GM12878 (cell line): ENCODE measurements at regions of chr3 and their contacts with region 1.

Region 1: GRCh38 chr3:150408221-150409102 is at the start of gene TSC22D2:
- DNase-seq: peak; percentile 69
- ATAC-seq: peak; percentile 73
- H3K4me3 ChIP-seq: peak within 1 kb of the TSS; percentile 96
- H3K27ac ChIP-seq: peak within 1 kb of the TSS; percentile 92
- H3K4me1 ChIP-seq: no peaks in the 10 kb centered on the region
- H3K27me3 ChIP-seq: no peaks in the 10 kb centered on the region
- CTCF ChIP-seq: no peak
- EP300 ChIP-seq: peak; percentile 9 to 57; a peak in 1 of 4 replicates
- POLR2A ChIP-seq: peak; percentile 77
- RAD21 ChIP-seq: no peak
- polyA plus RNA-seq, gene TSC22D2: 10.5 to 19.4 TPM

Region 2: GRCh38 chr3:150227839-150228238 is 180.6 kb before region 1 on chr3:
- CTCF ChIA-PET with region 1: interaction called, 4 read pairs
- POLR2A ChIA-PET with region 1: no interaction called
- RAD21 ChIA-PET with region 1: interaction called, 5 read pairs
- SMC1A ChIA-PET with region 1: no interaction called
- in situ Hi-C with region 1: no loop called
- intact Hi-C with region 1: loop called (anchors 5 kb)
- DNase-seq: no peak
- ATAC-seq: peak; percentile 94
- H3K4me3 ChIP-seq: no peak overlapping the region
- H3K27ac ChIP-seq: no peak overlapping the region
- H3K4me1 ChIP-seq: no peaks in the 10 kb centered on the region
- H3K27me3 ChIP-seq: 0 out of 4 replicates have a peak, but pooled peaks cover 0 to 3% of the 10 kb centered on the region in 2 experiments
- CTCF ChIP-seq: peak; percentile 71 to 81 (median 80)
- EP300 ChIP-seq: no peak
- POLR2A ChIP-seq: no peak
- RAD21 ChIP-seq: peak; percentile 87

Region 3: DNA sequence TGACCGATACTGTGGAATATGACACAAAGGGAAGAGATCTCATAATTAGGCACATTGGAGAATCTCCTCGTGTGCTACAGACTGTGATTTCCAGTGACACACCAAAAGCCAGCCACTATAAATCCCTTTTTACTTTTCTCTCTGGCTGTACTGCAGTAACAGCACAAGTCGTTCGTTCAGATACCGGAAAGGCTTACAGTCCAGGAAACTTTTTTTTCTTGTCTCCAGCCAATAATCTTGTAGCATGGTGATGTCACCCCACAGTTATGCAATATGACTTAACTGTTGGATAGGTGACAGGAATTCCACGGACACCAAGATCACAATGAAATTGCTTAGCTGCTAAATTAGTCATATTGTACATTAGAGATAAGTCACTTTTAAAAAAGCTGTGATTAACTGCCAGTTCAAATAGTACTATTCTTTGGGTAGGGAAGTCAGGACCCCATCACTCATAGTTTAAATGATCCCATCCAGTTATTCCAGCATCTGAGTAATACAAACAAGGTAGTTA is 36.7 kb before region 1 on chr3:
- CTCF ChIA-PET with region 1: interaction called, 13 read pairs
- POLR2A ChIA-PET with region 1: interaction called, 6 read pairs
- RAD21 ChIA-PET with region 1: interaction called, 7 read pairs
- SMC1A ChIA-PET with region 1: interaction called, 11 read pairs
- in situ Hi-C with region 1: no loop called
- intact Hi-C with region 1: loop called (anchors 5 kb)
- DNase-seq: no peak
- ATAC-seq: peak; percentile 20; the same call in 2 of the 3 replicates
- H3K4me3 ChIP-seq: no peak overlapping the region
- H3K27ac ChIP-seq: no peak overlapping the region
- H3K4me1 ChIP-seq: 0 out of 2 replicates have a peak, but pooled peaks cover 2% of the 10 kb centered on the region
- H3K27me3 ChIP-seq: no peaks in the 10 kb centered on the region
- CTCF ChIP-seq: no peak
- EP300 ChIP-seq: no peak
- POLR2A ChIP-seq: no peak
- RAD21 ChIP-seq: no peak

Region 4: GRCh38 chr3:150391200-150391599 is 17.3 kb before region 1 on chr3:
- CTCF ChIA-PET with region 1: interaction called, 33 read pairs
- POLR2A ChIA-PET with region 1: interaction called, 26 read pairs
- RAD21 ChIA-PET with region 1: interaction called, 46 read pairs
- SMC1A ChIA-PET with region 1: interaction called, 128 read pairs
- in situ Hi-C with region 1: no loop called
- intact Hi-C with region 1: no loop called
- DNase-seq: no peak
- ATAC-seq: no peak
- H3K4me3 ChIP-seq: no peak overlapping the region
- H3K27ac ChIP-seq: no peak overlapping the region
- H3K4me1 ChIP-seq: peaks cover 8% of the 10 kb centered on the region
- H3K27me3 ChIP-seq: no peaks in the 10 kb centered on the region
- CTCF ChIP-seq: no peak
- EP300 ChIP-seq: no peak
- POLR2A ChIP-seq: no peak
- RAD21 ChIP-seq: no peak

Region 5: GRCh38 chr3:150421799-150422548 is 13.5 kb after region 1 on chr3:
- CTCF ChIA-PET with region 1: interaction called, 35 read pairs
- POLR2A ChIA-PET with region 1: interaction called, 21 read pairs
- RAD21 ChIA-PET with region 1: interaction called, 22 read pairs
- SMC1A ChIA-PET with region 1: interaction called, 50 read pairs
- in situ Hi-C with region 1: no loop called
- intact Hi-C with region 1: no loop called
- DNase-seq: no peak
- ATAC-seq: peak; percentile 51
- H3K4me3 ChIP-seq: no peak overlapping the region
- H3K27ac ChIP-seq: no peak overlapping the region
- H3K4me1 ChIP-seq: no peaks in the 10 kb centered on the region
- H3K27me3 ChIP-seq: no peaks in the 10 kb centered on the region
- CTCF ChIP-seq: peak in 1 of 3 experiments; percentile 31; a peak in 1 of 6 replicates
- EP300 ChIP-seq: no peak
- POLR2A ChIP-seq: no peak
- RAD21 ChIP-seq: no peak

Region 6: GRCh38 chr3:150546226-150547044 is 138.0 kb after region 1 on chr3 and contains the starts of genes EIF2A and SERP1:
- CTCF ChIA-PET with region 1: no interaction called
- POLR2A ChIA-PET with region 1: interaction called, 8 read pairs
- RAD21 ChIA-PET with region 1: interaction called, 3 read pairs
- SMC1A ChIA-PET with region 1: interaction called, 3 read pairs
- in situ Hi-C with region 1: no loop called
- intact Hi-C with region 1: loop called (anchors 2 kb)
- DNase-seq: peak; percentile 98
- ATAC-seq: peak; percentile 92
- H3K4me3 ChIP-seq: peak within 1 kb of the TSS; percentile 97
- H3K27ac ChIP-seq: peak within 1 kb of the TSS; percentile 96
- H3K4me1 ChIP-seq: peaks cover 3% of the 10 kb centered on the region; the same call in 1 of the 2 replicates
- H3K27me3 ChIP-seq: no peaks in the 10 kb centered on the region
- CTCF ChIP-seq: no peak
- EP300 ChIP-seq: peak in 1 of 2 experiments; percentile 44; a peak in 1 of 4 replicates
- POLR2A ChIP-seq: peak; percentile 97
- RAD21 ChIP-seq: no peak
- polyA plus RNA-seq, gene EIF2A: 126 to 130 TPM
- polyA plus RNA-seq, gene SERP1: 31.1 to 46.7 TPM

Region 7: DNA sequence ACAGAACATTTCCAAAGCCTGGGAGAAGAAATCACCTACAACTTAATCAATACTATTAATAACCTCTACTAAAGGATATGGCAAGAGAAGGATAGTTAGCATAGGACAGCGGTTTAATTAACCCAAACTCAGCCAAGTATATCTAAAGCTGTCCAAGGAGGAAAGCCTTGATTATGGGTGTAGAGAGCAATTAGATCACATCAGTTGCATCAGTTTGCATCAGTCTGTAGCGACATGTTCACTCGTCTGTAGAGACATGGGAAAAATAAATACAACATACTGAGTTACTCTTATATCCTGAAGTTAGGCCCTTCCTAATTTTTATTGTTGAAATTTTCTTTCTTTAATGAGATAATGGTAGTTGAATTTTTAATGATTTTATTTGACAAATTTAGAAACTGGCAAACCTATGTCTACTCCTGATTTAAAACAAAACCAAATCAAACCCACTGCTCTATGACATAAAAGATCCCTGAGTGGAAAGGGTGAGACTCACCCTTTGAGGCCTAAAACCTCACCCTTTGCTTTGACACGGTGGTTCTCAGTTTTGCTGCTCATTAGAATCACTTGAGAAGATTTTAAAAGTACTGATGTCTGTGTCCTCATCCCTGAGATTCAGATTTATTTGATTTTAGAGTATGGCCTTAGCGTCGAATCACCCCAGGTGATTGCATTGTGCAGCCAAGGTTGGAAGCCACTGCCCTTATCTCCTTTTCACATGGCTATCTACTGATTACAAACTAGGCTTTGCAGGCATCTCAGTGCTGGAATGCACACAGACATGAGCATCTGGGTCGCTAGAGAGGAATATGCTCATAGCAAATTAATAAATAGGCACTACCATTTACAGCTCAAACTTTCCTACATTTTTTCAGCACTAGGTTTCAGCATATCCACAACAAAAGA is 566.9 kb after region 1 on chr3:
- CTCF ChIA-PET with region 1: no interaction called
- POLR2A ChIA-PET with region 1: no interaction called
- RAD21 ChIA-PET with region 1: no interaction called
- SMC1A ChIA-PET with region 1: no interaction called
- in situ Hi-C with region 1: no loop called
- intact Hi-C with region 1: no loop called
- DNase-seq: no peak
- ATAC-seq: no peak
- H3K4me3 ChIP-seq: no peak overlapping the region
- H3K27ac ChIP-seq: no peak overlapping the region
- H3K4me1 ChIP-seq: no peaks in the 10 kb centered on the region
- H3K27me3 ChIP-seq: peaks cover 0 to 3% of the 10 kb centered on the region in 2 experiments; a peak in 2 of 4 replicates
- CTCF ChIP-seq: no peak
- EP300 ChIP-seq: no peak
- POLR2A ChIP-seq: no peak
- RAD21 ChIP-seq: no peak